ENCODE measurements at regions of chr2 and their contacts with region 1.

Region 1: DNA sequence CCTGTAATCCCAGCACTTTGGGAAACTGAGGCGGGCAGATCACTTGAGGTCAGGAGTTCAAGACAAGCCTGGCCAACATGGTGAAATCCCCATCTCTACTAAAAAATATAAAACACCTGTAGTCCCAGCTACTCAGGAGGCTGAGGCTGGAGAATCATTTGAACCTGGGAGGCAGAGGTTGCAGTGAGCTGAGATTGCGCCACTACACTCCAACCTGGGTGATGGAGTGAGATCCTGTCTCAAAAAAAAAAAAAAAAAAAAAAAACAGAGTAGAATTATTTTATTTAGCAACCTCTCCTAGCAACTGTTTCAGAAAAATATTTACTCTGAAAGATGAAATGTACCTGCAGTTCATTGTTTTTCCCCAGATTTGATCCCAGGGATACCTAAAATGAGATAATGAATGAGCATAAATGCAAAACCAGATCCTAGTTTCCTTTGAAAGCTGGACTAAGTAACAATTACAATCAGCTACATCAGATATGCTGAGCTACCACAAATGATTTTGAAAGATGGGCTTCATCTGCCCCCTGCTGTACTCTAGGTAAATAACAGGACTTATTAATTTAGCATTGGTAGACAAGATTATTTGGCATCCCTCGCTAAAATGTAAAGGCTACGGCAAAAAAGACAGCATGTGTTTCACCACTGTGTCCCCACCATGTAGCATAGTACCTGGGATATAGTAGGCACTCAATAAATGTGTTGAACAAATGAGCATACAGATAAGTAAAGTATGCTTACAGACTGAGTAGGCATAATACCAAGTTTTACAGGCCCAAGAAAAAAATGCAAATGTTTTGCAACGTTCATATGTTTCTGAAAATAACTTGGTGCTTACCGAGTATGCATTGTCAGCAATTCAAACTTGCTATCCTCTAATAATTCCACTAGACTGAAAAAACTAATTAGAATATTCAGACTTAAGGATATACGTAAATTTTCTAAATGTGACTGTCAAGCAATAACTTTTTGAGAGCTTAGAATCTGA is 102.5 kb downstream of the ATL2 start:
- DNase-seq: peak; percentile 81
- H3K4me3 ChIP-seq: no peak overlapping the region
- H3K27ac ChIP-seq: 0 out of 4 replicates have a peak overlapping the region, but pooled peaks of 1 of the 2 experiments have one; percentile 18
- H3K4me1 ChIP-seq: no peaks in the 10 kb centered on the region; a peak in 1 of 4 replicates
- H3K27me3 ChIP-seq: no peaks in the 10 kb centered on the region
- CTCF ChIP-seq: peak; percentile 86
- EP300 ChIP-seq: peak in 1 of 2 experiments; percentile 50; a peak in 1 of 4 replicates
- RAD21 ChIP-seq: peak; percentile 100

Region 2: GRCh38 chr2:37973615-37974353 is 300.8 kb before region 1 on chr2:
- CTCF ChIA-PET with region 1: interaction called, 15 read pairs
- POLR2A ChIA-PET with region 1: no interaction called
- DNase-seq: no peak
- H3K4me3 ChIP-seq: no peak overlapping the region
- H3K27ac ChIP-seq: no peak overlapping the region
- H3K4me1 ChIP-seq: no peaks in the 10 kb centered on the region; a peak in 1 of 4 replicates
- H3K27me3 ChIP-seq: no peaks in the 10 kb centered on the region
- CTCF ChIP-seq: no peak
- EP300 ChIP-seq: no peak
- RAD21 ChIP-seq: no peak

Region 3: GRCh38 chr2:37993143-37993542 is 281.4 kb before region 1 on chr2:
- CTCF ChIA-PET with region 1: interaction called, 25 read pairs
- POLR2A ChIA-PET with region 1: no interaction called
- DNase-seq: no peak
- H3K4me3 ChIP-seq: no peak overlapping the region
- H3K27ac ChIP-seq: no peak overlapping the region
- H3K4me1 ChIP-seq: no peaks in the 10 kb centered on the region
- H3K27me3 ChIP-seq: no peaks in the 10 kb centered on the region
- CTCF ChIP-seq: peak; percentile 27; the same call in 1 of the 2 replicates
- EP300 ChIP-seq: no peak
- RAD21 ChIP-seq: peak; percentile 21; the same call in 1 of the 2 replicates

Region 4: GRCh38 chr2:38115216-38116032 is 159.2 kb before region 1 on chr2:
- CTCF ChIA-PET with region 1: interaction called, 68 read pairs
- POLR2A ChIA-PET with region 1: no interaction called
- DNase-seq: peak; percentile 85
- H3K4me3 ChIP-seq: no peak overlapping the region; a peak in 1 of 4 replicates
- H3K27ac ChIP-seq: peak overlapping the region in 1 of 2 experiments; percentile 54; a peak in 1 of 4 replicates
- H3K4me1 ChIP-seq: peaks cover 0 to 27% of the 10 kb centered on the region in 2 experiments; a peak in 2 of 4 replicates
- H3K27me3 ChIP-seq: no peaks in the 10 kb centered on the region
- CTCF ChIP-seq: peak; percentile 98
- EP300 ChIP-seq: 0 out of 4 replicates have a peak, but pooled peaks of 1 of the 2 experiments have one; percentile 14
- RAD21 ChIP-seq: peak; percentile 99

Region 5: DNA sequence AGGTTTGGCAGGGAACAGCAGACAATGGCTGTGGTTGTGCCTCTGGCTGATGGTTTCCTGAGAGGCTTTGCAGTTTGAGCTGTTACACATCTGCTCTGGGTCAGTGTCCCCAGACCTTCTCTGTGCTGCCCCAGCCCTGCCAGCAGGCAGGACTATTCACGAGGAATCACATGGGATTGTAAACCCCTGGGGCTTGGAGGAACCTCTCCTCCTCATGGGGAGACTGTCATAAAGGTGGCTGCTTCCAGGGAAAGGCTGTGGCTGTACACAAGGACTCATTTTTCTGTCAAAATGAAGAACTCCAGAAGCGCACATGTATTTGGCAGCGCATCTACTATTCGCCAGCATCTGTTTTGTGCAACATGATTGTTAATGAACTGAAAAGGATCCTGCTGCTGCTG is 56.0 kb before region 1 on chr2:
- CTCF ChIA-PET with region 1: interaction called, 18 read pairs
- POLR2A ChIA-PET with region 1: no interaction called
- DNase-seq: peak; percentile 74
- H3K4me3 ChIP-seq: peak overlapping the region in 1 of 2 experiments; percentile 4; a peak in 1 of 4 replicates
- H3K27ac ChIP-seq: peak overlapping the region in 1 of 2 experiments; percentile 99; a peak in 2 of 4 replicates
- H3K4me1 ChIP-seq: peaks cover 0 to 44% of the 10 kb centered on the region in 2 experiments; a peak in 2 of 4 replicates
- H3K27me3 ChIP-seq: no peaks in the 10 kb centered on the region
- CTCF ChIP-seq: no peak
- EP300 ChIP-seq: peak in 1 of 2 experiments; percentile 97; a peak in 2 of 4 replicates
- RAD21 ChIP-seq: peak; percentile 53

Region 6: GRCh38 chr2:38293152-38293865 is 18.7 kb after region 1 on chr2:
- CTCF ChIA-PET with region 1: interaction called, 15 read pairs
- POLR2A ChIA-PET with region 1: no interaction called
- DNase-seq: no peak
- H3K4me3 ChIP-seq: no peak overlapping the region
- H3K27ac ChIP-seq: no peak overlapping the region
- H3K4me1 ChIP-seq: no peaks in the 10 kb centered on the region
- H3K27me3 ChIP-seq: no peaks in the 10 kb centered on the region
- CTCF ChIP-seq: no peak
- EP300 ChIP-seq: no peak
- RAD21 ChIP-seq: no peak

Region 7: GRCh38 chr2:38386377-38386776 is 111.8 kb after region 1 on chr2:
- CTCF ChIA-PET with region 1: no interaction called
- POLR2A ChIA-PET with region 1: no interaction called
- DNase-seq: no peak
- H3K4me3 ChIP-seq: no peak overlapping the region
- H3K27ac ChIP-seq: no peak overlapping the region
- H3K4me1 ChIP-seq: no peaks in the 10 kb centered on the region
- H3K27me3 ChIP-seq: no peaks in the 10 kb centered on the region
- CTCF ChIP-seq: no peak
- EP300 ChIP-seq: no peak
- RAD21 ChIP-seq: no peak

Measured in SK-N-SH (cell line).